CD4-positive, alpha-beta T cell (primary cell): ENCODE measurements at regions of chr1 and their contacts with region 1.

Region 1: GRCh38 chr1:23809751-23810171 is 9.2 kb upstream of the GALE start:
- DNase-seq: peak; percentile 73 to 91 (median 78)
- ATAC-seq: peak; percentile 94
- H3K4me3 ChIP-seq: no peak overlapping the region
- H3K4me3 Mint-ChIP-seq: no peak overlapping the region
- H3K27ac ChIP-seq: no peak overlapping the region
- H3K27ac Mint-ChIP-seq: no peak overlapping the region
- H3K4me1 ChIP-seq: peaks cover 16% of the 10 kb centered on the region
- H3K4me1 Mint-ChIP-seq: peaks cover 14% of the 10 kb centered on the region
- H3K27me3 ChIP-seq: no peaks in the 10 kb centered on the region
- H3K27me3 Mint-ChIP-seq: no peaks in the 10 kb centered on the region
- CTCF ChIP-seq: peak; percentile 68

Region 2: DNA sequence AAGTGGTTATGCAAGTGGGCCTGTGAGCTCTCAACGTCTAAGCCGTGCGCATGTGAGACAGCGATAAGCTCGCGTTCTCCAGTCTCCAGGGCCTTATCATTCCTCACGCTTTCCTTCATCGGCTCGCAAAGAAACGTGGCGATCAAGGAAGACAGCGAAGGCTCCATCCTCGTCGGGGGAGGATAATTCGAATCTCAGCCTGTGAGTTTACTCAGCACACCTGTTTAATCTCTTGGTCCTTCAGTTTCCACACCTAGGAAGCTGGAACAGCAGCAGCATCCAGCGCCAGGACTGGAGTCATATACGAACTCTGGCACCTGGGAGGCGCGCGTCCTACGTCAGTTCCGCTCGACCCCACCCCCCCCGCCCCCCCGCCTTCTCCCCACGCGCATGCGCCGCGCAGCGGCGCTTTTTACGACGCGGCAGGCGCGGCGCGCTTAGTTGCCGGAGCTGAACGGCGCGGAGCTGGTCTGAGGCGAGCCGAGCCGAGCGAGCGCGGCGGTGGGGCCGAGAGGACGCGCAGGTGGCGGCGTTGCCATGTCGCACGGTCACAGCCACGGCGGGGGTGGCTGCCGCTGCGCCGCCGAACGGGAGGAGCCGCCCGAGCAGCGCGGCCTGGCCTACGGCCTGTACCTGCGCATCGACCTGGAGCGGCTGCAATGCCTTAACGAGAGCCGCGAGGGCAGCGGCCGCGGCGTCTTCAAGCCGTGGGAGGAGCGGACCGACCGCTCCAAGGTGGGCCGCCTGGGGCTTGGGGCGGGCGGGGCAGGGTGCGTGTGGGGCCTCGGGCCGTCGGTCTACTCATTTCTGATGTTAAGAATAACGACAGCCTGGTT is 31.6 kb before region 1 on chr1 and contains the start of gene PITHD1:
- CTCF ChIA-PET with region 1: interaction called, 10 read pairs
- POLR2A ChIA-PET with region 1: interaction called, 4 read pairs
- intact Hi-C with region 1: no loop called
- DNase-seq: peak; percentile 58 to 94 (median 78)
- ATAC-seq: peak; percentile 80
- H3K4me3 ChIP-seq: peak within 1 kb of the TSS; percentile 80
- H3K4me3 Mint-ChIP-seq: peak within 1 kb of the TSS; percentile 92
- H3K27ac ChIP-seq: peak within 1 kb of the TSS; percentile 81 to 89
- H3K27ac Mint-ChIP-seq: peak within 1 kb of the TSS; percentile 98
- H3K4me1 ChIP-seq: peaks cover 34% of the 10 kb centered on the region
- H3K4me1 Mint-ChIP-seq: peaks cover 46% of the 10 kb centered on the region
- H3K27me3 ChIP-seq: no peaks in the 10 kb centered on the region
- H3K27me3 Mint-ChIP-seq: no peaks in the 10 kb centered on the region
- CTCF ChIP-seq: no peak
- total RNA-seq, gene PITHD1: 110 to 111 TPM

Region 3: DNA sequence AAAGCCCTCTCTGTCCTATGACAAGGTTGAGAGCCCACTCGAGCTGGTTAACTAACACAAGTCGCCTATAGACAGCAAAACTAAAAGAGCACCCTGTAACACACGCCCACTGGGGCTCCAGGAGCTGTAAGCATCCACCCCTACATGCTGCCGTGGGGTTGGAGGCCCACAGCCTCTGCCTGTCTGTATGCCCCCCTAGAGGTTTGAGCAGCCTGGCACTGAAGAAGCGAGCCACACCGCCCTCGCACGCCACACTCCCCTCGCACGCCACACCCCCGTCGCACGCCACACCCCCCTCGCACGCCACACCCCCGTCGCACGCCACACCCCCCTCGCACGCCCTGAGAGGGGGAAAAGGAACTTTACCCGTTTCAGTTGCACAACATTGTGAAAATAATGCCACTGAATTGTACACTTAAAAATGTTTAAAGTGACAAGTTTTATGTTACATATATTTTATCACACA is 28.7 kb after region 1 on chr1:
- CTCF ChIA-PET with region 1: interaction called, 11 read pairs
- POLR2A ChIA-PET with region 1: interaction called, 3 read pairs
- intact Hi-C with region 1: loop called in 1 of 2 experiments (anchors 5 kb)
- DNase-seq: peak; percentile 63 to 89 (median 70)
- ATAC-seq: peak; percentile 99
- H3K4me3 ChIP-seq: peak overlapping the region; percentile 38
- H3K4me3 Mint-ChIP-seq: peak overlapping the region; percentile 65
- H3K27ac ChIP-seq: no peak overlapping the region
- H3K27ac Mint-ChIP-seq: no peak overlapping the region
- H3K4me1 ChIP-seq: peaks cover 10% of the 10 kb centered on the region
- H3K4me1 Mint-ChIP-seq: peaks cover 12% of the 10 kb centered on the region
- H3K27me3 ChIP-seq: no peaks in the 10 kb centered on the region
- H3K27me3 Mint-ChIP-seq: peaks cover 11% of the 10 kb centered on the region
- CTCF ChIP-seq: no peak

Region 4: DNA sequence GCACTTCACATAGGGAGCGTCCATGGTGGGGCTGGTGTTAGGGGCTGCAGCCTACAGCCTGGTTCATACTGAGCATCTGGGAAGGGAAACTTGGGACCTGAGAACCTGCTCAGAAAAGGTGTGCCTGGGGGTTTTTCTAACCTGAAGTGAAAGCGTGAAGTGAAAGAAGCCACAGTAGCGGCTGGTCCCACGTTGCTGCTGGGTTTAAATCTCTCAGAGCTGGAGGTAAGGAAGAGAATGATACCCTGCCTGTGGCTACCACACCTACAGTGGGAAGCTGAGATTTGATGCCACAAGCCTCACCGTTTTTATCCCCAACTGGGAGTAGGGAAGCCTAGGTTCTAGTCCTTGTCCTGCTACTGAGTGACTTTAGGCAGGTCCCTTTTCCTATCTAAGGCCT is 79.3 kb after region 1 on chr1:
- CTCF ChIA-PET with region 1: no interaction called
- POLR2A ChIA-PET with region 1: no interaction called
- intact Hi-C with region 1: no loop called
- DNase-seq: no peak
- ATAC-seq: no peak
- H3K4me3 ChIP-seq: no peak overlapping the region
- H3K4me3 Mint-ChIP-seq: no peak overlapping the region
- H3K27ac ChIP-seq: no peak overlapping the region
- H3K27ac Mint-ChIP-seq: no peak overlapping the region
- H3K4me1 ChIP-seq: no peaks in the 10 kb centered on the region
- H3K4me1 Mint-ChIP-seq: no peaks in the 10 kb centered on the region
- H3K27me3 ChIP-seq: no peaks in the 10 kb centered on the region
- H3K27me3 Mint-ChIP-seq: peaks cover 5% of the 10 kb centered on the region
- CTCF ChIP-seq: no peak

Region 5: DNA sequence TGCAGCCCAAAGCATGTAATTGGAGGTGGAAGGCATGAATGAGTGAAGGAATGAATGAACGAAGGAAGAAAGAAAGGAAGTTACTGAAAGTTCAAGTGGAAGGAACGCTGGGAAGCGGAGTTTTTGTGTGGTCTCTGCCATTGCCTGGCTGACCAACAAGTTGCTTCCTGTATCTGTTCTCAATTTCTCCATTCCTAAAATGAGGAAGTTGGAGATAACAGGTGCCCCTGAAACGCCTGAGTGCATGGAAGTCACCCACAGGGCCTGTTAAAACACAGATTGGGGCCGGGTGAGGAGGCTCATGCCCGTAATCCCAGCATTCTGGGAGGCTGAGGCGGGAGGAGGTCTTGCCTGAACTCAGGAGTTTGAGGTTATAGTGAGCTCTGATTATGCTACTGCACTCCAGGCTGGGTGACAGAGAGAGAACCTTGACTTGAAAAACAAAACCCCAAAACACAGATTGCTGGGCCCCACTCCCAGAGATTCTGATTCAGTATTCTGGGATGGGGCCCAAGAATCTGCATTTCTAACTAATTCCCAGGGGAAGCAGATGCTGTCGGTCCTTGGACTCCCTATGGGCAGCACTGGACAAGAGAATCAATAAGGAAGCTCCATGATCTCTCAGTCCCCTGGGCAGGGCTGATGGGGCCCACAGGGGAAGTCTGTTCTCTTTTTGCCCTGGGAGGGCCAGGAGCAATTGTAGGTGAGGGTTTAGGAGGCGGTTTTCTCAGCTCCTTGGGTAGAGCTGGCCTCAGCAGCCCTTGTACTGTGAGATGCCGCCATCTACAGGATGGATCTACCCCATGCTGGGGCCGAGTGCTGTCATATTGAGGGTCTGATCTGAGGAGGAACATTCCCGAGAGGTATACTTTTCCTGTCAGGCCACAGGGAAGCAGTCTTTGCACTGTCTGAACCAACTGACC is 106.7 kb after region 1 on chr1:
- CTCF ChIA-PET with region 1: interaction called, 8 read pairs
- POLR2A ChIA-PET with region 1: interaction called, 4 read pairs
- intact Hi-C with region 1: loop called in 1 of 2 experiments (anchors 5 kb)
- DNase-seq: peak; percentile 9 to 74 (median 36)
- ATAC-seq: peak; percentile 92
- H3K4me3 ChIP-seq: no peak overlapping the region
- H3K4me3 Mint-ChIP-seq: no peak overlapping the region
- H3K27ac ChIP-seq: no peak overlapping the region
- H3K27ac Mint-ChIP-seq: no peak overlapping the region
- H3K4me1 ChIP-seq: peaks cover 21% of the 10 kb centered on the region
- H3K4me1 Mint-ChIP-seq: peaks cover 26% of the 10 kb centered on the region
- H3K27me3 ChIP-seq: no peaks in the 10 kb centered on the region
- H3K27me3 Mint-ChIP-seq: no peaks in the 10 kb centered on the region
- CTCF ChIP-seq: no peak

Region 6: GRCh38 chr1:24027838-24028468 is 218.2 kb after region 1 on chr1:
- CTCF ChIA-PET with region 1: interaction called, 3 read pairs
- POLR2A ChIA-PET with region 1: no interaction called
- intact Hi-C with region 1: loop called (anchors 2 to 5 kb)
- DNase-seq: peak in 3 of 14 experiments; percentile 35 to 47 (median 45)
- ATAC-seq: peak; percentile 32
- H3K4me3 ChIP-seq: no peak overlapping the region
- H3K4me3 Mint-ChIP-seq: no peak overlapping the region
- H3K27ac ChIP-seq: no peak overlapping the region
- H3K27ac Mint-ChIP-seq: no peak overlapping the region
- H3K4me1 ChIP-seq: no peaks in the 10 kb centered on the region
- H3K4me1 Mint-ChIP-seq: peaks cover 4% of the 10 kb centered on the region
- H3K27me3 ChIP-seq: no peaks in the 10 kb centered on the region
- H3K27me3 Mint-ChIP-seq: no peaks in the 10 kb centered on the region
- CTCF ChIP-seq: peak; percentile 21